ENCODE measurements at regions of chr1 and their contacts with region 1.

Region 1: GRCh38 chr1:23777979-23778814 is at the start of gene PITHD1:
- DNase-seq: peak; percentile 84
- H3K4me3 Mint-ChIP-seq: peak within 1 kb of the TSS; percentile 88
- H3K27ac Mint-ChIP-seq: peak within 1 kb of the TSS; percentile 96
- H3K4me1 Mint-ChIP-seq: peaks cover 12% of the 10 kb centered on the region
- H3K27me3 Mint-ChIP-seq: no peaks in the 10 kb centered on the region
- CTCF ChIP-seq: no peak
- total RNA-seq, gene PITHD1: 37.7 and 37.8 TPM in 2 replicates

Region 2: DNA sequence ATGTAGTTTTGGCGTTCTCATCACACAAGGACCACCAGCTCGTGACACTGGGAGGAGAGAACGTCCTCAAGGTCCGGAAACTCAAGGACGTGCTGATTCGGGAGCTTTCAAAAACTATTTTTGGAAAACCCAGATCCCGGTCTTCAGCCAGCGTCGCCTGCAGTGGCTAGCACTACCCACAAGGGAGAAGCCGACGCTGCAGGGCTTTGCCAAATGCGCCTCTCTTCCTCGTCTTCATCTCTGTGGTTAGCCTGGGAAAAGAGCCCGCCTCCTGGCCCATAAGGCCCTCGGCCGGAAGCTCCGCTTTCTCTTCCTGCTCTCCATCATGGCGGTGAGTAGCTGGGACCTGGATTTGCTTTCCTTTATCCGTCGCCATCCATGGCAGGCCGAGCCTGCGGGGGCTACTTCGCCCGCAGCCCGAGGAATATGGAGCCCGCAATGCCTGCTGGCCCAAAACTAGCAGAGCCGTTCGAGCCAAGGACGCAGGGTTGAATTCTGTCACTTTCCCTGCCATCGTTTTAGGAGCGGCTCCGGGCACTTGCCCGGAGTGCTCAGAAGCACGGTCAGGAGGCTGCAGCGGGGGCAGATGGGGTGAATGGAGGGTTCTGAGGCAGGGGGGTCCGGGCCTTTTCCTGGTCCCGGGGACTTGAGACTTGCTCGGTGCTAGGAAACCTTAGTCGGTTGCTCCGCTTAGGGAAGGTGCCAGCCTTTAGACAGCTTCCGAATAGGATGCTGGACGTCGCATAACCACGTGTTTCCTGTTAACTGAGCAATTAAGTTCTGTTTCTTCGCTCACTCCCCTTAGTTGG is 86.5 kb before region 1 on chr1 and contains the start of gene RPL11:
- CTCF ChIA-PET with region 1: no interaction called
- POLR2A ChIA-PET with region 1: interaction called, 12 read pairs
- intact Hi-C with region 1: no loop called
- DNase-seq: peak; percentile 96
- H3K4me3 Mint-ChIP-seq: peak within 1 kb of the TSS; percentile 88
- H3K27ac Mint-ChIP-seq: peak within 1 kb of the TSS; percentile 97
- H3K4me1 Mint-ChIP-seq: peaks cover 35% of the 10 kb centered on the region
- H3K27me3 Mint-ChIP-seq: no peaks in the 10 kb centered on the region
- CTCF ChIP-seq: peak; percentile 44
- total RNA-seq, gene RPL11: 1,201 and 1,563 TPM in 2 replicates

Region 3: GRCh38 chr1:23718482-23718881 is 59.7 kb before region 1 on chr1:
- CTCF ChIA-PET with region 1: no interaction called
- POLR2A ChIA-PET with region 1: no interaction called
- intact Hi-C with region 1: no loop called
- DNase-seq: peak; percentile 61
- H3K4me3 Mint-ChIP-seq: no peak overlapping the region
- H3K27ac Mint-ChIP-seq: no peak overlapping the region
- H3K4me1 Mint-ChIP-seq: peaks cover 16% of the 10 kb centered on the region
- H3K27me3 Mint-ChIP-seq: no peaks in the 10 kb centered on the region
- CTCF ChIP-seq: peak; percentile 56

Region 4: GRCh38 chr1:23800400-23801337 is 22.5 kb after region 1 on chr1 and contains the start of gene GALE:
- CTCF ChIA-PET with region 1: interaction called, 10 read pairs
- POLR2A ChIA-PET with region 1: interaction called, 395 read pairs
- intact Hi-C with region 1: no loop called
- DNase-seq: peak; percentile 96
- H3K4me3 Mint-ChIP-seq: peak within 1 kb of the TSS; percentile 90
- H3K27ac Mint-ChIP-seq: peak within 1 kb of the TSS; percentile 91
- H3K4me1 Mint-ChIP-seq: no peaks in the 10 kb centered on the region
- H3K27me3 Mint-ChIP-seq: no peaks in the 10 kb centered on the region
- CTCF ChIP-seq: no peak
- total RNA-seq, gene GALE: 112 and 143 TPM in 2 replicates

Region 5: GRCh38 chr1:23809751-23810171 is 31.6 kb after region 1 on chr1:
- CTCF ChIA-PET with region 1: interaction called, 3 read pairs
- POLR2A ChIA-PET with region 1: interaction called, 15 read pairs
- intact Hi-C with region 1: no loop called
- DNase-seq: peak; percentile 77
- H3K4me3 Mint-ChIP-seq: no peak overlapping the region
- H3K27ac Mint-ChIP-seq: no peak overlapping the region
- H3K4me1 Mint-ChIP-seq: peaks cover 14% of the 10 kb centered on the region
- H3K27me3 Mint-ChIP-seq: no peaks in the 10 kb centered on the region
- CTCF ChIP-seq: peak; percentile 72

Region 6: GRCh38 chr1:23854568-23854967 is 76.4 kb after region 1 on chr1:
- CTCF ChIA-PET with region 1: interaction called, 10 read pairs
- POLR2A ChIA-PET with region 1: no interaction called
- intact Hi-C with region 1: no loop called
- DNase-seq: peak; percentile 29
- H3K4me3 Mint-ChIP-seq: no peak overlapping the region
- H3K27ac Mint-ChIP-seq: no peak overlapping the region
- H3K4me1 Mint-ChIP-seq: no peaks in the 10 kb centered on the region
- H3K27me3 Mint-ChIP-seq: no peaks in the 10 kb centered on the region
- CTCF ChIP-seq: peak; percentile 16

Region 7: DNA sequence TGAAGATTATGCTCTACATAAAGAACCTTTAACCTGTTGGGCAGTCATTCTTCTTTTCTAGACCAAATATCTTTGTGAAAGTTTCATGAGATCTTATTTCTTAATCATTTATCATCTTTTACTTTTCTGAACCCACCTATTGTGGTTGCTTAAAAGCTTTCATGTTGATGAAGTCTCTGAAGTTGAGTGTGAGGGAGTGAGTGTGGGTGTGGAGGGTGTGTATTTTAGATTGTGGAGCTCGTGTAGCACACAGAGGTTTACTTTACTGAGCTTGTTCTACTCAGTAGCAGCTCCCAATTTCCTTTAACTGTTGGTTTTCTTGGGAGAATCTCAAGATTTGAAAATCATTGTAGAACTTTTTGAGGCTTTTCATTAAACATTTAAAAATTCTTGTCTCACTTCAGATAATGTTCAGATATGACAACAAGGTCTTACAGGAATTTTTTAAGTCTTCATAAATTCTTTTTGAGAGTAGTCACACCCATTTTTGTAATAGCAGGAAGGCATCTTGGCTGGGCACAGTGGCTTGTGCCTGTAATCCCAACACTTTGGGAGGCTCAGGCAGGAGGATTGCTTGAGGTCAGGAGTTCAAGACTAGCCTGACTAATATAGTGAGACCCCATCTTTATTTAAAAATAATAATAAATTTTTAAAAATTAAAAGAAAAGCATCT is 881.9 kb after region 1 on chr1:
- CTCF ChIA-PET with region 1: no interaction called
- POLR2A ChIA-PET with region 1: no interaction called
- intact Hi-C with region 1: no loop called
- DNase-seq: no peak
- H3K4me3 Mint-ChIP-seq: no peak overlapping the region
- H3K27ac Mint-ChIP-seq: peak overlapping the region; percentile 31
- H3K4me1 Mint-ChIP-seq: peaks cover 14% of the 10 kb centered on the region
- H3K27me3 Mint-ChIP-seq: no peaks in the 10 kb centered on the region
- CTCF ChIP-seq: no peak